Heart right ventricle (tissue), 16 donors: ENCODE measurements at regions of chr12 and their contacts with region 1.

Region 1: GRCh38 chr12:40921563-40922163 is 229.4 kb downstream of the CNTN1 start:
- DNase-seq: no peak
- ATAC-seq: no peak
- H3K4me3 ChIP-seq: no peak overlapping the region
- H3K27ac ChIP-seq: no peak overlapping the region
- H3K4me1 ChIP-seq: no peaks in the 10 kb centered on the region
- H3K27me3 ChIP-seq: peaks cover 0 to 5% (median 0%) of the 10 kb centered on the region in 7 donors
- CTCF ChIP-seq: peak; percentile 21 to 72 (median 62)

Region 2: DNA sequence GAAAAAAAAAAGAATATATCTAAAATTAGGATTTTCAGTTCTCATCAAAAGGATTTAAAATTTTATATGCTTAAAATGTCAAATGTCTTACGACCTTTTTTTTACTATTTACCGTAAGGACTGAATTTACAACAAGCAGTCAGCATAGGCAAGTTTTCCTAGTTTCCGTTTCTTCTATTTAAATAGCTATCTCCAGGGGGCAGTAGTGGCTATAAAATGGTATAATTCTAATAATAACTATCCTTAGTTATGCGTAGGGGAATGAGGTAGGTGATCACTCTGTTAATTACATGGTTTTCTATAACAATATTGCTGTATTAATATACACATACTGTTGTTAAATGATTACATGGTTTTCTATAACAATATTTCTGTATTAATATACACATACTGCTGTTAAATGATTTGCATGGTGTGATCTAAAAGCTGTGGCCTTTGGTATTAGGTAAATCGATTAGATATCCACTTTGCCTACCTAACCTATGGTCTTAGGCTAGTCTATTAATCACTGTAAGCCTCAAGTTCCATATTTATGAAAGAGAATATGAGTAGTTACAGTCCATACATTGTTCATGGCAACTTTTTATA is 48.8 kb after region 1 on chr12:
- intact Hi-C with region 1: loop called in 1 of 10 experiments (anchors 1 kb)
- DNase-seq: no peak
- ATAC-seq: no peak
- H3K4me3 ChIP-seq: no peak overlapping the region
- H3K27ac ChIP-seq: no peak overlapping the region
- H3K4me1 ChIP-seq: no peaks in the 10 kb centered on the region
- H3K27me3 ChIP-seq: no peaks in the 10 kb centered on the region
- CTCF ChIP-seq: peak in 2 of 9 donors; percentile 10 to 19